HCT116 (cell line): ENCODE measurements at regions of chr9 and their contacts with region 1.

Region 1: GRCh38 chr9:129610473-129611301 is 10.2 kb downstream of the C9orf50 start:
- DNase-seq: no peak
- ATAC-seq: peak; percentile 43
- H3K4me3 ChIP-seq: peak overlapping the region; percentile 51 to 64
- H3K27ac ChIP-seq: peak overlapping the region; percentile 96
- H3K4me1 ChIP-seq: peaks cover 63 to 87% of the 10 kb centered on the region in 2 experiments
- H3K27me3 ChIP-seq: no peaks in the 10 kb centered on the region
- CTCF ChIP-seq: peak in 2 of 3 experiments; percentile 79 to 85; a peak in 4 of 6 replicates
- POLR2A ChIP-seq: no peak
- RAD21 ChIP-seq: no peak

Region 2: DNA sequence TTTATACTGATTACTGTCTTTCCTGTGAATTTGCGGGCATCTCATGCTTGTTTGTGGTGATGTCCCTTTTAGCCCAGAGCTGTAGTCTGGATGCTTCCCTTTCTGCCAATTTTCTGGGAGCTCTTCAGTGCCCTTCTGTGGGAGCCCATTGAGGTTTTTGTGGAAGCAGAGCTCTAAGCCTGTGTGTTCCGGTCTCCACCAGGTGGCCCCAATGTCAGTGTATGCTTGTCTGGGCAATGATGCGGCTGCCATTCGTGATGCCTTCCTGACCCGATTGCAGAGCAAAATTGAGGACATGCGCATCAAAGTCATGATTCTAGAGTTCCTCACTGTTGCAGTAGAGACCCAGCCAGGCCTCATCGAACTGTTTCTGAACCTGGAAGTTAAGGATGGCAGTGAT is 617.7 kb before region 1 on chr9:
- CTCF ChIA-PET with region 1: no interaction called
- POLR2A ChIA-PET with region 1: no interaction called
- RAD21 ChIA-PET with region 1: no interaction called
- intact Hi-C with region 1: no loop called
- DNase-seq: no peak
- ATAC-seq: peak; percentile 87
- H3K4me3 ChIP-seq: no peak overlapping the region
- H3K27ac ChIP-seq: no peak overlapping the region
- H3K4me1 ChIP-seq: no peaks in the 10 kb centered on the region
- H3K27me3 ChIP-seq: no peaks in the 10 kb centered on the region
- CTCF ChIP-seq: peak; percentile 33 to 44 (median 40); a peak in 5 of 6 replicates
- POLR2A ChIP-seq: no peak
- RAD21 ChIP-seq: peak; percentile 40

Region 3: GRCh38 chr9:129333953-129334724 is 276.5 kb before region 1 on chr9:
- CTCF ChIA-PET with region 1: no interaction called
- POLR2A ChIA-PET with region 1: interaction called, 5 read pairs
- RAD21 ChIA-PET with region 1: no interaction called
- intact Hi-C with region 1: loop called (anchors 2 kb)
- DNase-seq: peak; percentile 93
- ATAC-seq: peak; percentile 81
- H3K4me3 ChIP-seq: peak overlapping the region; percentile 44 to 52
- H3K27ac ChIP-seq: peak overlapping the region; percentile 100
- H3K4me1 ChIP-seq: peaks cover 54 to 68% of the 10 kb centered on the region in 2 experiments
- H3K27me3 ChIP-seq: no peaks in the 10 kb centered on the region
- CTCF ChIP-seq: no peak
- POLR2A ChIP-seq: peak; percentile 16
- RAD21 ChIP-seq: no peak

Region 4: GRCh38 chr9:129487642-129488409 is 122.9 kb before region 1 on chr9:
- CTCF ChIA-PET with region 1: no interaction called
- POLR2A ChIA-PET with region 1: interaction called, 34 read pairs
- RAD21 ChIA-PET with region 1: no interaction called
- intact Hi-C with region 1: loop called (anchors 1 kb)
- DNase-seq: no peak
- ATAC-seq: peak; percentile 18
- H3K4me3 ChIP-seq: peak overlapping the region; percentile 2 to 58
- H3K27ac ChIP-seq: peak overlapping the region; percentile 100
- H3K4me1 ChIP-seq: peaks cover 86 to 100% of the 10 kb centered on the region in 2 experiments
- H3K27me3 ChIP-seq: no peaks in the 10 kb centered on the region
- CTCF ChIP-seq: no peak
- POLR2A ChIP-seq: peak; percentile 41
- RAD21 ChIP-seq: no peak

Region 5: GRCh38 chr9:129557192-129558036 is 53.3 kb before region 1 on chr9:
- CTCF ChIA-PET with region 1: no interaction called
- POLR2A ChIA-PET with region 1: interaction called, 13 read pairs
- RAD21 ChIA-PET with region 1: no interaction called
- intact Hi-C with region 1: no loop called
- DNase-seq: peak; percentile 89
- ATAC-seq: peak; percentile 79
- H3K4me3 ChIP-seq: peak overlapping the region; percentile 33 to 45
- H3K27ac ChIP-seq: peak overlapping the region; percentile 97
- H3K4me1 ChIP-seq: peaks cover 90 to 99% of the 10 kb centered on the region in 2 experiments
- H3K27me3 ChIP-seq: no peaks in the 10 kb centered on the region
- CTCF ChIP-seq: no peak
- POLR2A ChIP-seq: peak; percentile 57
- RAD21 ChIP-seq: no peak

Region 6: GRCh38 chr9:129597355-129598088 is 13.2 kb before region 1 on chr9:
- CTCF ChIA-PET with region 1: no interaction called
- POLR2A ChIA-PET with region 1: interaction called, 29 read pairs
- RAD21 ChIA-PET with region 1: interaction called in 1 of 2 experiments, 7 read pairs
- intact Hi-C with region 1: no loop called
- DNase-seq: peak; percentile 86
- ATAC-seq: peak; percentile 65
- H3K4me3 ChIP-seq: peak overlapping the region; percentile 57 to 67
- H3K27ac ChIP-seq: peak overlapping the region; percentile 98
- H3K4me1 ChIP-seq: peaks cover 82 to 95% of the 10 kb centered on the region in 2 experiments
- H3K27me3 ChIP-seq: no peaks in the 10 kb centered on the region
- CTCF ChIP-seq: no peak
- POLR2A ChIP-seq: no peak
- RAD21 ChIP-seq: no peak